ENCODE measurements at regions of chr1 and their contacts with region 1.

Region 1: GRCh38 chr1:42146626-42147320 is 6.4 kb upstream of the GUCA2B start:
- DNase-seq: peak; percentile 75 to 79 (median 76)
- ATAC-seq: peak; percentile 94
- H3K4me3 ChIP-seq: no peak overlapping the region
- H3K27ac ChIP-seq: no peak overlapping the region
- H3K4me1 ChIP-seq: peaks cover 0 to 4% of the 10 kb centered on the region in 2 experiments; a peak in 1 of 5 replicates
- H3K27me3 ChIP-seq: peaks cover 21 to 60% of the 10 kb centered on the region in 2 experiments
- CTCF ChIP-seq: peak; percentile 80 to 95 (median 91)
- EP300 ChIP-seq: no peak
- POLR2A ChIP-seq: no peak
- RAD21 ChIP-seq: peak; percentile 73 to 95

Region 2: DNA sequence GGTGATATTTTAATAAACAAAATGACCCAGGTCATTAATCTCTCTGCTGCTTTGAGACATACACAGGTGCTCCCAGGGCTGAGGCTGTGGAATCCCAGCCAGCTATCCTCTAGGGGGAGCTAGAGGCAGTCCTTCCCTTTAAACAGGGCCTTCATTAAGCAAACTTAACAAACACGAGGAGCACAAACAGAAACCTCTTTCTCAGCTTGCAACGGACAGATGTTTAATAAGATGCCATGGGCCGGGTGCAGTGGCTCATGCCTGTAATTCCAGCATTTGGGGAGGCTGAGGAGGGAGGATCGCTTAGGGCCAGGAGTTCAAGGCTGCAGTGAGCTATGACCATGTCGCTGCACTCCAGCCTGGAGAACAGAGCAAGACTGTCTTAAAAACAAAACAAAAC is 334.7 kb before region 1 on chr1:
- CTCF ChIA-PET with region 1: no interaction called
- POLR2A ChIA-PET with region 1: no interaction called
- in situ Hi-C with region 1: loop called (anchors 25 kb)
- intact Hi-C with region 1: no loop called
- DNase-seq: peak; percentile 67 to 74 (median 70)
- ATAC-seq: peak; percentile 93
- H3K4me3 ChIP-seq: no peak overlapping the region
- H3K27ac ChIP-seq: no peak overlapping the region
- H3K4me1 ChIP-seq: no peaks in the 10 kb centered on the region
- H3K27me3 ChIP-seq: peaks cover 2 to 13% of the 10 kb centered on the region in 2 experiments; a peak in 3 of 5 replicates
- CTCF ChIP-seq: peak; percentile 64 to 81 (median 80)
- EP300 ChIP-seq: no peak
- POLR2A ChIP-seq: no peak
- RAD21 ChIP-seq: peak; percentile 43 to 79

Region 3: DNA sequence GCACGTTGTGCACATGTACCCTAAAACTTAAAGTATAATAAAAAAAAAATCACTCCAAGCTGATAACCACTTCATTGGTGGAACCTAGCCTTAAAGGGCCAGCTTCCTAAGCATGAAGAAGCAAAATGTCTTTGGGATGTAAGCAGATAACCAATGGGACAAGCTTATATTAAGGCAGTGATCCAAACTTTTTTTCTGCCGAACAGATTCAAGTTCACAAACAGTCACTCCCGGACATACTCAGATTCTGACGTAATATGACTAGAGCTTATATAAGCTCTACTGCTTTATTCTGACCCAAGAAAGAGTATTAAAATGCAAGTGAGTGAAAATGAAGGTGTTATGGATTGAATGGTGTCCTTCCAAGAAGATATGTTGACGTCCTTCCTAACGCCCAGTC is 183.1 kb before region 1 on chr1:
- CTCF ChIA-PET with region 1: no interaction called
- POLR2A ChIA-PET with region 1: no interaction called
- in situ Hi-C with region 1: no loop called
- intact Hi-C with region 1: no loop called
- DNase-seq: no peak
- ATAC-seq: no peak
- H3K4me3 ChIP-seq: no peak overlapping the region
- H3K27ac ChIP-seq: no peak overlapping the region
- H3K4me1 ChIP-seq: no peaks in the 10 kb centered on the region
- H3K27me3 ChIP-seq: peaks cover 0 to 16% of the 10 kb centered on the region in 2 experiments; a peak in 3 of 5 replicates
- CTCF ChIP-seq: no peak
- EP300 ChIP-seq: no peak
- POLR2A ChIP-seq: no peak
- RAD21 ChIP-seq: no peak

Region 4: GRCh38 chr1:42730988-42731387 is 584.2 kb after region 1 on chr1:
- CTCF ChIA-PET with region 1: no interaction called
- POLR2A ChIA-PET with region 1: no interaction called
- in situ Hi-C with region 1: loop called (anchors 5 kb)
- intact Hi-C with region 1: loop called (anchors 10 kb)
- DNase-seq: peak; percentile 47 to 72 (median 52)
- ATAC-seq: peak; percentile 66
- H3K4me3 ChIP-seq: no peak overlapping the region
- H3K27ac ChIP-seq: no peak overlapping the region
- H3K4me1 ChIP-seq: peaks cover 0 to 11% of the 10 kb centered on the region in 2 experiments; a peak in 3 of 5 replicates
- H3K27me3 ChIP-seq: peaks cover 2 to 24% of the 10 kb centered on the region in 2 experiments; a peak in 3 of 5 replicates
- CTCF ChIP-seq: peak; percentile 59 to 69 (median 65); a peak in 5 of 6 replicates
- EP300 ChIP-seq: no peak
- POLR2A ChIP-seq: no peak
- RAD21 ChIP-seq: peak in 1 of 2 experiments; percentile 88; a peak in 2 of 4 replicates

Region 5: GRCh38 chr1:42736150-42736850 is 589.5 kb after region 1 on chr1:
- CTCF ChIA-PET with region 1: no interaction called
- POLR2A ChIA-PET with region 1: no interaction called
- in situ Hi-C with region 1: loop called (anchors 5 kb)
- intact Hi-C with region 1: loop called (anchors 10 kb)
- DNase-seq: peak; percentile 69 to 81 (median 77)
- ATAC-seq: peak; percentile 90
- H3K4me3 ChIP-seq: no peak overlapping the region
- H3K27ac ChIP-seq: no peak overlapping the region
- H3K4me1 ChIP-seq: peaks cover 0 to 45% of the 10 kb centered on the region in 2 experiments; a peak in 3 of 5 replicates
- H3K27me3 ChIP-seq: peaks cover 7 to 49% of the 10 kb centered on the region in 2 experiments; a peak in 4 of 5 replicates
- CTCF ChIP-seq: peak; percentile 69 to 81 (median 73)
- EP300 ChIP-seq: no peak
- POLR2A ChIP-seq: no peak
- RAD21 ChIP-seq: peak in 1 of 2 experiments; percentile 59; a peak in 2 of 4 replicates

Region 6: DNA sequence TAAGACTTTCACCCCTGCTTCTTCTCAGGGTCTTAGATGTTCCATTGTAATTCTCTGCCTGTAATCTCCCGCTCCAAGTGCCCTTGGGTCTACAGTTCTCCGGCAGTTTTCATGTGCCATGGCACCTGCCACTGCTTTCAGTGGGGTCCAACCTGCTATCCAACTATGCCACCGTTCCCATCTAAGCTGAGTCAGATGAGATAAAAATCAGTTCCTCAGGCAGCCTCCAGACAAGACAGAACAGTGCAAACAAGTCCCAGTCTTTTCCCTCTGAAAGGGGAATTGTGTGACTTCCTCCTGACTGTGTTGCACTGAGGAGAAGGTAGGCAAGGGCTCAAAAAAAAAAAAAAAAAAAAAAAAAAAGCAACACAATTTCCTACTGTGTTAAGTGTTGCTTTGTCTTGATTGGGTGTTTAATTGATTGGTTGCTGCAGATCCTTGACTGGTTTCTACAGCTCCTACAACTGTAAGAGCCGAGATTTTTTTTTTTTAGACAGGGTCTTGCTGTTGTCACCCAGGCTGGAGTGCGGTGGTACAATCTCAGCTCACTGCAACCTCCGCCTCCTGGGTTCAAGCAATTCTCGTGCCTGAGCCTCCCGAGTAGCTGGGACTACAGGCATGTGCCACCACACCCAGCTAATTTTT is 974.6 kb after region 1 on chr1:
- CTCF ChIA-PET with region 1: no interaction called
- POLR2A ChIA-PET with region 1: no interaction called
- in situ Hi-C with region 1: no loop called
- intact Hi-C with region 1: no loop called
- DNase-seq: no peak
- ATAC-seq: no peak; the same call in 2 of the 3 replicates
- H3K4me3 ChIP-seq: no peak overlapping the region
- H3K27ac ChIP-seq: no peak overlapping the region
- H3K4me1 ChIP-seq: peaks cover 0 to 9% of the 10 kb centered on the region in 2 experiments; a peak in 3 of 5 replicates
- H3K27me3 ChIP-seq: no peaks in the 10 kb centered on the region
- CTCF ChIP-seq: no peak
- EP300 ChIP-seq: no peak
- POLR2A ChIP-seq: no peak
- RAD21 ChIP-seq: no peak

Measured in K562 (cell line).